ENCODE measurements at regions of chr17 and their contacts with region 1.

Region 1: DNA sequence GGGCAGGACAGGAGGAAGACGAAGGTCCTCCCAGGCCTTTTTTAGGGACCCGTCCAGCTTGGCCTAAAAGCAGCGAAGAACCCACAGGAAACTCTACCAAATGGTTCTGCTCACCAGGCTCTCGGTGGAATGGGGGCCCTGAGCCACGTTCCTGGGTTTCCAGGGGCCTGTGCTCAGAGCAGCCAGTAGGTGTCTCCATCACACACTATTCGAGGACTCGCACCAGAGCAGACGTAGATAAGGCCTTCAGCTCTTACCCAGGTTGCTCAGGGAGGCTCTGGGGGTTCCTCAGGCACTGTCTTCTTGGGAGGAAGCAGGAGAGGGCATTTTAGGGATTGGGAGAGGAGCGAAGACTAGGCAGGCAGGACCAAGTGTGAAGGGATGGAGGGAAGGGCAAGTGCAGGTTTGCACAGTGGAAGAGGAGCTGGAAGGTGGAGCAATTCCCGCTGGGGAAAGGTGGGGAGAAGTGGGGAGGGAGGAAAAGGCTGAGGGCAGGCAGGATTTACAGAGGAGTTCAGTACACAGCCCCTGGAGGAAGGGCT is 157.1 kb downstream of the RGS9 start:
- DNase-seq: no peak

Region 2: DNA sequence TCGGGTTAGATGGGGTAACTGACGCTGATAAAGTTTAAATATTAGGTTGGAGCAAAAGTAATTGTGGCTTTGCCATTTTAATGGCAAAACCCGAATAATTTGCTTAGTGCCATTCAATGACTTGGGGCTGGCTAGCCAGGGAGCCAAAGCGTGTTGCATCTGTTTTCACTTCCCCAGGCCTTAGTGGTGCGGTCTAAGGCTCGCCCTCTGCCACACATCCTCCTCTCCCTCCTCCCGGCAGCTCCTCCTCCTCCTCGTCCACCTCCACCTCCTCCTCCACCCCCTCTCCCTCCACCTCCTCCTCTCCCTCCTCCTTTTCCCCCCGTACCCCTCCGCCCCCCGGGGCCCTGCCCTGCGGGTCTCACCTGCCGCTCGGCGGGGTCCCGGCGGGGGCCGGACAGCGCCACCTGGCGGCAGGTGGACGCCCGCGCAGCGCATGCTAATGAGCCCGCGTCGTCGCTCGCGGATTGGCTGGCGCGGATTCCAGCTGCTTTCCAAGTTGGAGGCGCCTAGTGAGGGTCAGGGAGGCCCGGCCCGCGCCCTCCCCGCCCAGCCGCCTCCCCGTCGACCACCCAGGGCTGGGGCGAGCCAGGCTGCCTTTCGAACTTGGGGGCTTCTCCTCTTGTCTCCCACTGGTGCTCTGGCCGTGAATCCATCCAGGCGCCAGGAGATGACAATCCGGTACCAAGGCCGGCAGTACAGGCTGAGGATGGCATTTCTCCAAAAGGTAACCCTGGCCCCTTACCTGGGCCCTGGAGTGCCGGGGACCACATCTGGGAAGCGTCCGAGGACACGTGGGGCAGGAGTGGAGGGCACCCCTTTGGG is 193.7 kb before region 1 on chr17:
- intact Hi-C with region 1: no loop called
- DNase-seq: peak; percentile 96

Region 3: DNA sequence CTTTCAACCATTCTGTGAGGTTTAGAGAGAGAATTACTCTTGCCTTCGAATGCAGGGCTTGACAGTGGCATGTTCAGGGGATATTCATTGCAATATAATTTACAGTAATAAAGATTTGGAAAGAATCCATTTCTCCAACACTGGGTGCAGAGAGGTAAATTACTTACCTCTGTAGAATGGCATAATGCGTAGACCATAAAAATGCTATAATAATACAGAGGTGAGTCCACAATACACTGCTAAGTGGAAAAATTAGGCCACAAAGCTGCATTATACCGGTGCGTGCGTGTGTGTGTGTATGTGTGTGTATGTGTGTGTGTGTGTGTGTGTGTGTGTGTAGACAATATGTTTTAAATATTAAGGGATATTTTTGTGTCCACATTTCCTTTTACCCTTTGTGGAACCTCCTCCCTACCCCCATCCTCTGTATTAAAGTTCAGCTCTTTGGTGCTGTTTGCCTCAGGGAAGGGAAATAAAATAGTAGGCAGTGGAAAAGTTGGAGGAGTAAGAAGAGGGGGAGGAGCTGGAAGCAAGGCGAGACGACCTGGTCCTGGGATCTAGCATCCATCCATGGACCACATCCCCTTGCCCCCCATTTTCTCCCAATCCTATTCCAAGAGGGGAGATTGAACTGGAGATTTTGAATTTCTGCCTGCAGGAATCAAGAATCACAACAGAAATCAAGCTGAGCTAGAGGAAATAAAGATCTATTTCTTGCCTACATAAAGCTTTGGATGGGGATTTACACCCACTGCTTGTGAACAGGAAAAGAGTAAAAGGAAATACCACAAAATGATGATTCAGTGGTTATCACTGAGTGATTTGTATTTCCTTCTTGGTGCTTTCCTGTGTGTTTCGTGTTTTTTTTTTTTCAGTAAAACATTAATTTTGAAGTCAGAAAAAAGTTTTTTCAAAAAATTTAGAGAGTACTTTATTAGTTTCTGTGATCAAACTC is 32.3 kb before region 1 on chr17:
- intact Hi-C with region 1: no loop called
- DNase-seq: no peak

Region 4: DNA sequence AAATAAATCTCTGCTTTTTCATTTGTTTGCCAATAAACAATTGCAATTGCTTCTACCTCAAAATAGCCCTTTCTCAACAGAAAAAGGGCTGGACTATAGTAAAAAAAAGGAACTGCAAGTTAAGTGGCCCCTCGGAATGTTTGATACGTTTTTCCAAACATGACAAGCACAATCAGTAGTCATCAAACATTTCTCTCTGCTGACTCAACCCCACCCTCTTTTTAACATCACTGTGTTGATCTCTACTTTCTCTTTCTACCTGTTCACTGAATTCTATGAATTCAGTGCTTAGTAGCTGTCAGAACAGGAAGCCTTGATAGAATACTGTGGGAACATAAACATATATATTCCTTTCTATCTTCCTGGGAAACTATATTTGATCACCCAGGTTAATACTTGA is 383.7 kb after region 1 on chr17:
- intact Hi-C with region 1: loop called (anchors 10 kb)
- DNase-seq: no peak

Region 5: DNA sequence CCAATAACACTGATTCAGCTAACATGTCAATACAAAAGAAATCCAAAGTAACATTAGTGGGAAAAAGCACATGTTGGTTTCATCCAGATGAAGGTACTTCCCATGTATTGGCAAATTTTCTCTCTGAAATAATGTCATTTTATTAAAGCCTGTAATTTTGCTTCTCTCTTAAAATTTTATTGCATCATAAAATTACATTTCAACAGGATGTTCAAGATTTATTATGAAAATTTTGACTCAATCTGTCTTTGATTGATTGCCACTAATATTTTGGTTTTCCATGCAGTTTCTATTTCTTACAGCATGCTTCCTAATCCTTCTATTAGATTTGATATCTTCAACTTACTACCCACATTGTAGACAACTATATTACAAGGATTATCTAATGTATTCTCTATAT is 580.2 kb after region 1 on chr17:
- intact Hi-C with region 1: loop called (anchors 5 kb)
- DNase-seq: no peak

Measured in cardiac septum (tissue), 1 donor.